Activated CD4-positive, alpha-beta T cell treated with anti-CD3 and anti-CD28 coated beads, Interleukin-2, amount 10 ng/mL, durations not matched to agents 7 days and 5 days (primary cell): ENCODE measurements at regions of chr19 and their contacts with region 1.

Region 1: DNA sequence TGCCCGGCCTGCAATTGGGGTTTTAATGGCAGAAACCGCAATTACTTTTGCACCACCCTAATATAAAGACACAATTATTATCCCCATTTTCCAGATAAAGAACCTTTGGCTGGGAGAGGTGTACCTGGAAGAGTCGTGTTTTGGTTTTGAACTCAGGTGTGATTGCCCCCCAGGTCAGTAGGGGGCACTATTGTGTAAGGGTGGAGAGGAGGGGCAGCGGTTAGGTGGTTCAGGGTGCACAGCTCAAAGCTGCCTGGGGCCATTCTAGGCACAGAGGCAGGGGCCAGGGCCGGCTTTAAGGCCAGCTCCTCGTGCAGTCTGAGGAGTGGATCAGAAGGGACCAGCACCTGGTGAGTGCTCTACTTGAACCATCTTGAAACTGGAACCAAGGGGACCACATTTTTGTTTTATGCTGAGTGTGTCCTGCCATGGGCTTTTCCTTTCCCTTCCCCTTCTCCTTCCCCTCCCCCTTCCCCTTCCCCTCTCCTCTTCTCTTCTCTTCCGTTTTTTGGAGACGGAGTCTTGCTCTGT is 5.8 kb upstream of the FCGRT start:
- DNase-seq: peak; percentile 86
- H3K4me3 Mint-ChIP-seq: peak overlapping the region; percentile 41
- H3K27ac Mint-ChIP-seq: no peak overlapping the region
- H3K4me1 Mint-ChIP-seq: peaks cover 40% of the 10 kb centered on the region
- H3K27me3 Mint-ChIP-seq: no peaks in the 10 kb centered on the region

Region 2: GRCh38 chr19:49451430-49452181 is 55.0 kb before region 1 on chr19 and contains the start of gene PIH1D1:
- CTCF ChIA-PET with region 1: no interaction called
- POLR2A ChIA-PET with region 1: no interaction called
- DNase-seq: peak; percentile 99
- H3K4me3 Mint-ChIP-seq: peak within 1 kb of the TSS; percentile 98
- H3K27ac Mint-ChIP-seq: peak within 1 kb of the TSS; percentile 100
- H3K4me1 Mint-ChIP-seq: peaks cover 62% of the 10 kb centered on the region
- H3K27me3 Mint-ChIP-seq: no peaks in the 10 kb centered on the region
- total RNA-seq, gene PIH1D1: 146 to 176 TPM

Region 3: DNA sequence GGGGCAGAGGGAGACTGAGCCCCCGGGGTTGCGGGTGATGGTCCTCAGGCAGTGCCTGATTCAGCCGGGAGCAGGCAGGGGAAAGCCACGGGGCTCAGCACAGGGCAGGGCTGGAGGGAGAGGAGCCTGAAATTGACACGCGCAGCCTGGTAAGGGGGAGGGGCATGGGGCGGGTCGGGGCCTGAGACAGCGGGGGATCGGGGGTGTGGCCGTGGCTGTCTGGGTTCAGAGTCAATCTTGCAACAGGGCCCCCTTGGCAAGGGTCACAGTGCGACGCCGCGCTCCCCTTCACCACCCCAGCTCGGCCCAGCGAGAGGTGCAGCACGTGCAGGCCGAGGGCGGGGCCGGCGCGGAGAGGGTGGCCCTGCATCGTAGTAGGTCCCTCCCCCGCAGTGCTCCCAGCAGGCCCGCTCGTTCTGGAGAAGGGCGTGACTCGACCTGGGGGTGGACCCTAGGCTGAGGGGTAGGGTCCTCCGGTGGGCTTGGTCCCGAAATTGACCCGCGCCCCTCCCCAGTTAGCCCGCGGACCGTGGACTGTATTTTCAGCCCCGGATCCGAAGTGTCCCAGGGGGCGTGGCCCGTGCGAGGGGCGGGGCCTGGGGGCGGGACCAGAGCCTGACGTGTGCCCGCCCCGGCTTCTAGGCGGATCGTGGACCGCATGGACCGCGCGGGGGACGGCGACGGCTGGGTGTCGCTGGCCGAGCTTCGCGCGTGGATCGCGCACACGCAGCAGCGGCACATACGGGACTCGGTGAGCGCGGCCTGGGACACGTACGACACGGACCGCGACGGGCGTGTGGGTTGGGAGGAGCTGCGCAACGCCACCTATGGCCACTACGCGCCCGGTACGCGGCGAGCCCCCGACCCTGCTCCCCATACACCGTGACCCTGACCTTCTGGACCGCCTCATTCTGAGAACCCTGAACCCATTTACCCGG is 27.2 kb after region 1 on chr19:
- CTCF ChIA-PET with region 1: interaction called, 17 read pairs
- POLR2A ChIA-PET with region 1: no interaction called
- DNase-seq: peak; percentile 85
- H3K4me3 Mint-ChIP-seq: peak overlapping the region; percentile 45
- H3K27ac Mint-ChIP-seq: peak overlapping the region; percentile 79
- H3K4me1 Mint-ChIP-seq: peaks cover 27% of the 10 kb centered on the region
- H3K27me3 Mint-ChIP-seq: peaks cover 4% of the 10 kb centered on the region

Region 4: DNA sequence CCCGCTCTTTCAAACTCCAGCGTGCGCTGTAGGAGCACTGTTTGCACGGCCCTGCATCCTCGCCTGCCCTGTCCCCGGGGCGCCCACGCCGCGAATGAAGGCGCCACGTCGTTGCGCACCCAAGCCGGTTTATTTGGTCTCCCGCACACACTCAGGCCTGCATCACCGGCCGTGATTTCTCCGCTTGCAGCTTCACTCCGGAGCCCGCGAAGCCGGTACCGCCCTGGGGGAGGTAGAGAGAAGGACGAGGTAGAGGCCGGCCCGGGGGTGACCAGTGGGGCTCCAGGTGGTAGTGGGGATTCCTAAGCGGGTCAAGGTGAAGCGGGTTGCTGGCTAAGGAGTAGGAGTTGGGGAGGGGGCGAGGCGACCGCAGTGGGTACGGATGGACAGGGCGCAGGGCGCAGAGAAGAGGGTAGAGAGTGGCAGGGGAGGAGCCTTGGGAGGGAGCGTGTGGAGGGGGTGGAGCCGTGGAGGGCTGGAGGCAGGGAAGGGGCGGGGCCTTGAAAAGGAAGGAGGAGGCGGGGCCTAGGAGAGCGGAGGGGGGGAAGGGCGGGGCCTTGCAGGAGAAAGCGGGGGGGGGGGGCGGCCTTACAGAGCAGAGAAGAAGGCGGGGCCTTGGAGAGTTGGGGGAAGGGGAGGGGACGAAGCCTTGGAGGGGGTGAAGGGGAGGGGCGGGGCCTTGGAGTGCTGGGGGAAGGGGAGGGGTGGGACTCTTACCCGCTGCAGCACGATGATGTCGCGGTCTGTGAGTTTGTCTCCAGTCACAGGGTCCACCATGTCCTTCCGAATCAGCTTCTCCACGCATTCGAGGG is 49.2 kb after region 1 on chr19:
- CTCF ChIA-PET with region 1: interaction called, 12 read pairs
- POLR2A ChIA-PET with region 1: no interaction called
- DNase-seq: peak; percentile 89
- H3K4me3 Mint-ChIP-seq: peak overlapping the region; percentile 64
- H3K27ac Mint-ChIP-seq: peak overlapping the region; percentile 96
- H3K4me1 Mint-ChIP-seq: peaks cover 80% of the 10 kb centered on the region
- H3K27me3 Mint-ChIP-seq: no peaks in the 10 kb centered on the region